Cardiac septum (tissue), 1 donor: ENCODE measurements at regions of chr6 and their contacts with region 1.

Region 1: GRCh38 chr6:13711733-13712598 is at the start of gene RANBP9:
- DNase-seq: peak; percentile 92
- total RNA-seq, gene RANBP9: 40.2 TPM

Region 2: GRCh38 chr6:13762611-13763441 is 50.9 kb after region 1 on chr6:
- intact Hi-C with region 1: loop called (anchors 5 kb)
- DNase-seq: peak; percentile 71

Region 3: GRCh38 chr6:13814176-13814937 is 102.4 kb after region 1 on chr6 and contains the start of gene MCUR1:
- intact Hi-C with region 1: loop called (anchors 5 kb)
- DNase-seq: peak; percentile 91
- total RNA-seq, gene MCUR1: 31.8 TPM